ENCODE measurements at regions of chr16 and their contacts with region 1.

Region 1: GRCh38 chr16:17578921-17579874 is 108.4 kb upstream of the XYLT1 start:
- DNase-seq: peak; percentile 88
- H3K4me3 Mint-ChIP-seq: no peak overlapping the region
- H3K27ac Mint-ChIP-seq: no peak overlapping the region
- H3K4me1 Mint-ChIP-seq: peaks cover 7% of the 10 kb centered on the region
- H3K27me3 Mint-ChIP-seq: peaks cover 16% of the 10 kb centered on the region

Region 2: DNA sequence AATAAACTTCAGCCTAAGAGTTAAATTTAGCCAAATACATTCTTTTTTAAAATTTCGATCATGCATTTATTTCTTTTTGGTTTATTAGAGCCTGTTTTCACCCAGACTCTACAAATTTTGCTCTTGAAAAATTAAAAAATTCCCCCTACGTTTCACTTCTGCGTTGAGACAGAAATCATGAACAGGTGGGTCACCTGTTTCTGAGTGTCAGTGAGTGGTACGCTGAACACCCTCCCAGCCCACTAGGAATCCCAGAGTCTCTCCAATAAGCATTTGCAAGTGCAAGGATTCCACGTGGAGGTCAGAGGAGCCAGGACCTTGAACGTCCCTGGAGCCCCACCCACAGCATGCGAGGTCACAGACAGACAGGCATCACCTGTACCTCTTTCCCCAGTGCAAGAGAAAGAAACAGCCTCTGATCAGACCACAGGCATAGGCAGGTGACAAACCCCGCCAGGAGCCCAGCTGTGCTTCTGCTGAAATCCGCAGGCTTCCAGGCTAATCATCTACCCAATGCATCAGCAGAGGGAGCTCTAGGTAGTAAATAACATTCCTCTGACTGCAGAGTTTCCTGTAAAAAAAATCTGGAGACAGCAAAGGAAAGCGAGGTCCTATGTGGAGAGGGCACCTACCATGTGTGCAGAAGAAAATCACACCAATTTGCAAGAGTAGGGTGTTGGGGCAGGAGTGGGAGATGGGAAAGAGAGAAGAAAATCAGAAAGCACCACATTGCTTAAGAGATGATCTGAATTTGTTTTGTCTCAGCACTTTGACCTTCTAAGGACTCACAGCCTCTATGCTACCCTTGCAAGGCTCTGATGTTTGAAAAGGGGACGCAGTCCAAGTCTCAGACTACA is 102.6 kb before region 1 on chr16:
- intact Hi-C with region 1: loop called (anchors 2 kb)
- DNase-seq: peak; percentile 83
- H3K4me3 Mint-ChIP-seq: no peak overlapping the region
- H3K27ac Mint-ChIP-seq: no peak overlapping the region
- H3K4me1 Mint-ChIP-seq: peaks cover 26% of the 10 kb centered on the region
- H3K27me3 Mint-ChIP-seq: peaks cover 25% of the 10 kb centered on the region

Region 3: DNA sequence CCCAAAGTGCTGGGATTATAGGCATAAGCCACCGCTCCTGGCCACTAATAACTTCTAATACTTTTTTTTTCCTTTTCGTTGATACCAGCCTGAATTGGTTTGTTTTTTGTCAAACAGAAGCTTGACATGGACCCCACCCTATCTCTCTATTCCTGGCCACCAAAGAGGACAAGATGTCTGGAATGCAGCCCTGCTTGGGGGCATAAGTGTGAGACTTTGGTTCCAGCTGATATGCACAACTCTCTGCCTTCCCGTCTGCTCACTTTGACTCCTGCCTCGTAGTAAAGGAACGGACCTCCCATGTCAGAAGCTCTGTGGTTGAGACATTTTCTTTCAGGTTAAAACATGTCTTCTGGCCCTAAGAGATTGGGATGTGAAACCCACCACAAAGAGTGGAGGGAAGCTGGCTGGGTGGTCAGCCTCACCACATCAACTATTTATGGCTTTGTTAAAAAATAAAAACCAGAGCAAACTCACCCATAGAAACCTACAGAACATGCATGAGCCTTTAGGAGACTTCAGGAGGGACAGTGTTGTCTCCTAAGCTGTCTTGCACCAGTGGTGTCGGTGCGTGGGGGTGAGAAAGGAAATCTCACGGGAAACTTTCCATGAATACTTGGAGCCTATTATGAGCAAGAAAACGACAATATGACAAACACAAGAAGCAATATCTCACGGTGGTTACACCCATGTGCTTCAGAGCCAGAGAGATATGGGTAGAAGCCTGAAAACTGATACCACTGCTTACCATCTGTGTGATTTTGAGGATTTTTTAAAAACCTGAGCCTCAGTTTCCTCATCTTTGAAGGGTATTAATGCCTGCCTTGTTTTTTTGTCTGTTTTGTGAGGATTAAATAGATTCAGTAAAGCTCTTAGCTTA is 46.8 kb before region 1 on chr16:
- intact Hi-C with region 1: no loop called
- DNase-seq: no peak
- H3K4me3 Mint-ChIP-seq: no peak overlapping the region
- H3K27ac Mint-ChIP-seq: no peak overlapping the region
- H3K4me1 Mint-ChIP-seq: peaks cover 14% of the 10 kb centered on the region
- H3K27me3 Mint-ChIP-seq: peaks cover 5% of the 10 kb centered on the region

Region 4: GRCh38 chr16:17647879-17648872 is 69.0 kb after region 1 on chr16:
- intact Hi-C with region 1: no loop called
- DNase-seq: no peak
- H3K4me3 Mint-ChIP-seq: no peak overlapping the region
- H3K27ac Mint-ChIP-seq: no peak overlapping the region
- H3K4me1 Mint-ChIP-seq: no peaks in the 10 kb centered on the region
- H3K27me3 Mint-ChIP-seq: no peaks in the 10 kb centered on the region